ENCODE measurements at regions of chr21 and their contacts with region 1.

Region 1: GRCh38 chr21:39527664-39528381 is 76.1 kb downstream of the SH3BGR start:
- DNase-seq: no peak
- ATAC-seq: peak in 1 of 8 donors; percentile 18
- H3K4me3 ChIP-seq: no peak overlapping the region
- H3K27ac ChIP-seq: peak overlapping the region in 1 of 10 donors; percentile 51
- H3K4me1 ChIP-seq: peaks cover 3 to 39% (median 21%) of the 10 kb centered on the region in 9 donors
- H3K27me3 ChIP-seq: no peaks in the 10 kb centered on the region
- CTCF ChIP-seq: no peak

Region 2: GRCh38 chr21:39397646-39398385 is 130.0 kb before region 1 on chr21:
- intact Hi-C with region 1: no loop called
- DNase-seq: no peak
- ATAC-seq: no peak
- H3K4me3 ChIP-seq: no peak overlapping the region
- H3K27ac ChIP-seq: no peak overlapping the region
- H3K4me1 ChIP-seq: peaks cover 0 to 9% (median 0%) of the 10 kb centered on the region in 9 donors
- H3K27me3 ChIP-seq: no peaks in the 10 kb centered on the region
- CTCF ChIP-seq: no peak

Region 3: DNA sequence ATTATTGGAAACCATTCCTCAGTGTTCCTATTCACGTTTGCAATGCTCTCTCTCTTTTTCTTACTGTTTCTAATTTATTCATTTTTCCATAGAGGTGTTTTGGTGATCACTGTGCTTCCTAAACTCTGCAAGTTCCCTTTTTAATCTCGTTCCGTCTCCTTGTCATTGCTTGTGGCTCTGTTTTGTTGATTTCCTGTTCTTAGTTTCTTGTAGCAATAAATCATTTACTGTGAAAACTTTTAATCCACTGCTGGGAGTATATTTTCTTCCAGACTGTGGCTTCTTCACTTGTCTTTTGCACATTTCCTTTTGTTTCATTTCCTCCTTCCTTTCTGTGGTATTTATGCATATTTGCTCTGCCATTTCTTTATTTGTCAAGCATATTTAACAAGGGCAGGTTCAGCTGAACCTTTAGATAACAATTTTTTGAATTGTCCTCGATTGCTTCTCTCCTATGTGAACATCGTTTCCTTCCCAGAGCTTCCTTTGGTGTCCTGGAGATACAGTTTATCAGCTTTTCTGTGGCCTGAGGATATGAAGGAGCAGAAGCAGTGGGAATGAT is 88.5 kb after region 1 on chr21:
- intact Hi-C with region 1: loop called in 1 of 10 experiments (anchors 5 kb)
- DNase-seq: no peak
- ATAC-seq: no peak
- H3K4me3 ChIP-seq: no peak overlapping the region
- H3K27ac ChIP-seq: no peak overlapping the region
- H3K4me1 ChIP-seq: peaks cover 0 to 7% (median 5%) of the 10 kb centered on the region in 9 donors
- H3K27me3 ChIP-seq: peaks cover 0 to 57% (median 38%) of the 10 kb centered on the region in 7 donors
- CTCF ChIP-seq: no peak

Region 4: DNA sequence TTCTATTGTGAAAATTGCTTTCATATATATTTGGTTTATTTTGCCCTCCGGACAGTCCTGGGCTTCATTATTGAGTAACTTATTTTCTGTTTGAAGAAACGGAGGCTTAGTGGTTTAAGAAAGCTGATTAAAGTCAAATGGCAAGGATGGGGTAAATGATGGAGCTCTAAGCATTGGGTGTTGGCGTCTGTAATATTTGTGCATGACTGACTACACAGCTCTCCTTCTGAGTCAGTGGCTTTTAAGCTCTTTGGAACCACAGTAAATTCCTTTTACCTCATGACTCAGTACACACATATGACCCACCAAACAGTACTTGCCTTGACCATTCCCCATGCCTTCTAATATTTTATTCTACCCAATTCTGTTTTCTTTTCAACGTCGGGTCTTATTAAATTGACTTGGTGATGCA is 106.0 kb after region 1 on chr21:
- intact Hi-C with region 1: loop called in 1 of 10 experiments (anchors 10 kb)
- DNase-seq: no peak
- ATAC-seq: no peak
- H3K4me3 ChIP-seq: no peak overlapping the region
- H3K27ac ChIP-seq: no peak overlapping the region
- H3K4me1 ChIP-seq: no peaks in the 10 kb centered on the region
- H3K27me3 ChIP-seq: peaks cover 0 to 9% (median 0%) of the 10 kb centered on the region in 7 donors
- CTCF ChIP-seq: no peak

Region 5: GRCh38 chr21:39660191-39660980 is 132.6 kb after region 1 on chr21:
- intact Hi-C with region 1: loop called in 1 of 10 experiments (anchors 5 kb)
- DNase-seq: peak; percentile 43 to 71
- ATAC-seq: peak; percentile 85 to 96 (median 91)
- H3K4me3 ChIP-seq: peak overlapping the region in 5 of 10 donors; percentile 18 to 38 (median 35)
- H3K27ac ChIP-seq: peak overlapping the region in 9 of 10 donors; percentile 0 to 76 (median 61)
- H3K4me1 ChIP-seq: peaks cover 0 to 18% (median 14%) of the 10 kb centered on the region in 9 donors
- H3K27me3 ChIP-seq: no peaks in the 10 kb centered on the region
- CTCF ChIP-seq: no peak

Region 6: GRCh38 chr21:39715804-39716397 is 188.1 kb after region 1 on chr21:
- intact Hi-C with region 1: loop called in 3 of 10 experiments (anchors 2 to 5 kb)
- DNase-seq: peak; percentile 16 to 52
- ATAC-seq: peak in 1 of 8 donors; percentile 22
- H3K4me3 ChIP-seq: no peak overlapping the region
- H3K27ac ChIP-seq: no peak overlapping the region
- H3K4me1 ChIP-seq: peaks cover 0 to 12% (median 0%) of the 10 kb centered on the region in 9 donors
- H3K27me3 ChIP-seq: peaks cover 0 to 7% (median 2%) of the 10 kb centered on the region in 7 donors
- CTCF ChIP-seq: peak; percentile 52 to 83 (median 67)

Region 7: GRCh38 chr21:40457741-40458140 is 929.9 kb after region 1 on chr21:
- intact Hi-C with region 1: no loop called
- DNase-seq: no peak
- ATAC-seq: no peak
- H3K4me3 ChIP-seq: no peak overlapping the region
- H3K27ac ChIP-seq: no peak overlapping the region
- H3K4me1 ChIP-seq: no peaks in the 10 kb centered on the region
- H3K27me3 ChIP-seq: peaks cover 0 to 28% (median 0%) of the 10 kb centered on the region in 7 donors
- CTCF ChIP-seq: no peak